HCT116 (cell line): ENCODE measurements at regions of chr16 and their contacts with region 1.

Region 1: GRCh38 chr16:67279296-67280089 is at the start of gene PLEKHG4:
- DNase-seq: peak; percentile 52
- ATAC-seq: peak; percentile 84
- H3K4me3 ChIP-seq: peak within 1 kb of the TSS; percentile 86 to 87
- H3K27ac ChIP-seq: peak within 1 kb of the TSS; percentile 91
- H3K4me1 ChIP-seq: peaks cover 28 to 39% of the 10 kb centered on the region in 2 experiments
- H3K27me3 ChIP-seq: no peaks in the 10 kb centered on the region
- CTCF ChIP-seq: peak in 2 of 3 experiments; percentile 62 to 79; a peak in 4 of 6 replicates
- POLR2A ChIP-seq: peak; percentile 33
- RAD21 ChIP-seq: no peak
- total RNA-seq, gene PLEKHG4: 38.5 TPM

Region 2: DNA sequence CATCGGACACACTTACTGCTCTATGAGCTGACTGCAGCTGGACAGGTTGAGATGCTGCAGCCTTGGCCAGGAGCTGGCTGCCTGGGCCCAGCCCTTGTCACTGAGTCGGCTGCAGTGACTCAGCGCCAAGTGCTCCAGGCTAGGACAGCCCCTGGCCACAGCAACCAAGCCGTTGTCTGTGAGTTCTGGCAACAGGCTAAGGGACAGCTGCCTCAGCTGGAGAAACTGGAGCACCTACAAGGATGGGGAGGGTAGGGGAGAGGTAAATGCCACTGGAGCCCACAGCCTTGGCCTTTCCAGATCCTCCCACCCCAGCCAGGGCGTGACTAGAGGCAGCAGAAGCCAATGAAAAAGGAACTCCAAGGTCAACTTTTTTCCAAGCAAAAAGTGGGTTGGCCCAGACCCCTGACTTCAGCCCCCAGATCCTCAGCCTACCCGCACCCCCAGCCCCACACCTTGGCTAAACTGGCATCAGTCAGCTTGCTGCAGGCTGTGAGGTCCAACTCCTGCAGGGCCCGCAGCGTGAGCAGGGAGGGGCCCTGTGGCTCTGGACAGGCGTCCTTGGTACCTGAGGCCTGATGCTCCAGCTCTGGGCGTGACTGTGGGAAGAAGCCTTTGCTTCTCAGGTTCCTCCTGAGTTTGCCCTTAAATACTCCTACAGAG is 71.5 kb before region 1 on chr16:
- CTCF ChIA-PET with region 1: no interaction called
- POLR2A ChIA-PET with region 1: no interaction called
- RAD21 ChIA-PET with region 1: no interaction called
- intact Hi-C with region 1: no loop called
- DNase-seq: no peak
- ATAC-seq: peak; percentile 69
- H3K4me3 ChIP-seq: no peak overlapping the region
- H3K27ac ChIP-seq: peak overlapping the region; percentile 40; the same call in 1 of the 2 replicates
- H3K4me1 ChIP-seq: peaks cover 11 to 29% of the 10 kb centered on the region in 2 experiments
- H3K27me3 ChIP-seq: no peaks in the 10 kb centered on the region
- CTCF ChIP-seq: no peak
- POLR2A ChIP-seq: no peak
- RAD21 ChIP-seq: no peak

Region 3: DNA sequence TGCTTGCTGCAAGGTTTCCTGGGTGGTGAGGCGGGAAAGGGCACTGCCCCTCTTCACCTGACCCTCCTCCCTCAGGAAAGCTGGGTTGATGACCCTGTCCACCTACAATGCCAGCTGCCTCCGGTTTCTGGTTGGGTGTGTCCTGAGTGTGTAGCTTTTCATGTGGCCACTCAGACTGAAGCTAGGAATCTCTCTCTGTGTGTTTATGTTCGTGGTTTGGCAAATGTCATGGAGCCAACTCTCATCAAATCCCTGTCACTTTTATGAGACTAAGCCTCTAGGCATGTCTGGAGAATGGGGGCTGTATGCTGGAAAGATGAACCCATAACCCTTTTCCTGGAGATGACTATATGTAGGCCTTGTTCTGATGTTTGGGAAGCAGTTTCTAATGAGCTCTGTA is 16.9 kb after region 1 on chr16:
- CTCF ChIA-PET with region 1: no interaction called
- POLR2A ChIA-PET with region 1: no interaction called
- RAD21 ChIA-PET with region 1: no interaction called
- intact Hi-C with region 1: no loop called
- DNase-seq: no peak
- ATAC-seq: peak; percentile 60; the same call in 1 of the 2 replicates
- H3K4me3 ChIP-seq: no peak overlapping the region
- H3K27ac ChIP-seq: no peak overlapping the region
- H3K4me1 ChIP-seq: peaks cover 7 to 8% of the 10 kb centered on the region in 2 experiments
- H3K27me3 ChIP-seq: no peaks in the 10 kb centered on the region
- CTCF ChIP-seq: no peak
- POLR2A ChIP-seq: no peak
- RAD21 ChIP-seq: no peak

Region 4: DNA sequence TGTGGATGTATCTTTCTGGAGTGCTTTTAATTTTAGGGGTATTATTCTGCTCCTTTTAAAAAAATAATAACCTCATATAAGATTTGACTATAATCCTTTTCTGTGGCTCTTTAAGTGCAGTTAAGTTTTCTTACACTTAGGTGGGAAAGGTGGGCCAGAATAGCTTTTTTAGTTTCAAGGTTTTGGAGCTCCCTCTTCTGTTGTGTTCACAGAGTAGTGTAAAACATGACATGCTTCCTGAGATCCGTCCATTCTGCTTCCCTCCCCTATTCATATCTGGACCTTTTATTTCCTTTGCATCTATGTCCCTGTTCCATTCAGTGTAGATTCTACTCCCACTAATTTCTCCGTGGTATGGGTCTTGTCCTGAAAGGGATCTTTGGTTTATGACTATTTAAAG is 60.0 kb after region 1 on chr16:
- CTCF ChIA-PET with region 1: no interaction called
- POLR2A ChIA-PET with region 1: no interaction called
- RAD21 ChIA-PET with region 1: no interaction called
- intact Hi-C with region 1: loop called (anchors 5 kb)
- DNase-seq: peak; percentile 18
- ATAC-seq: peak; percentile 55; the same call in 1 of the 2 replicates
- H3K4me3 ChIP-seq: no peak overlapping the region
- H3K27ac ChIP-seq: no peak overlapping the region
- H3K4me1 ChIP-seq: no peaks in the 10 kb centered on the region
- H3K27me3 ChIP-seq: no peaks in the 10 kb centered on the region
- CTCF ChIP-seq: peak in 2 of 3 experiments; percentile 34 to 76; a peak in 5 of 6 replicates
- POLR2A ChIP-seq: no peak
- RAD21 ChIP-seq: peak; percentile 83

Region 5: DNA sequence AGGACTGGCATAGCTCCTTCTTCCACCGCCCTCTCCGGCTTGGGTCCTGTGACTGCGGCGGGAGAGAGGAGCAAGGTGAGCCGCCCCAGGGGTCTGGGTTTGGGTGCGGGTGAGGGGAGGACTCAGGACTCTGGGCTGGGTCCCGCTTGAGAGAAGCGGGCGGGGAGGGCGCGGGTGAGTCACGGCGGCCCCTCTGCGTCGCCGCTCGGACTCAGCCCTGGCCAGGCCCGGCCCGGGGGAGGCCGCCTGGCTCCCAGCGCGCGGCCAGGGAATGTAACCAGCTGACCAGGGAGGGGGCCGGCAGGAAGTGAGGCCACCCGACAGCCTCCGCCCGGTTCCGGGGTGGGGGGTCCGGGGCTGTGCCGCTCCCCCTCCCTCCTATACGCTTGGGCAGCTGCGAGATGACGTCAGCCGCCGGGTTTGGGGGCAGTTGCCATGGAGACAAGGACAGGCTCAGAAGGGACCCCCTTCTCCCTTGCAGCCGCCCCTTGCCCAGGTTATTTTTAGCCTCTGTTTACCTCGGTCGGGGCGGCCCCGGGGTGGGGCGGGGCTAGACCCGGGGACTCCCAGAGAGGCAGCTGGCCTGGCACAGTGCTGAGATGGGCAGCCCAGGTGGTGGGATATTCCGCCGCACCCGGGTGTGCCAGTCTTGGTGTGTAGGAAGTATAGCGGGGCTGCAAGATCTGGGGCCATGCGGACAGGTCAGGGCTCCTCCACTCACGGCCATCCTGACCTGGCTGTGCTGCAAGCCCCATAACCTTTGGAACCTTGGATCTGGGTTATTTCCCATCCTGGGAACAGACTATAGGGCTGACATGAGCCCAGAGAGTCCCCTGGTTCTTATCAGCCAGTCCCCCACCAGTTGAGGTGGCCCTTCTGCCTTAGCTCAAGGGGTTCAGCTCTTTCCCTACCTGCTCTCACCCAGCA is 250.8 kb after region 1 on chr16:
- CTCF ChIA-PET with region 1: no interaction called
- POLR2A ChIA-PET with region 1: no interaction called
- RAD21 ChIA-PET with region 1: no interaction called
- intact Hi-C with region 1: no loop called
- DNase-seq: no peak
- ATAC-seq: peak; percentile 25
- H3K4me3 ChIP-seq: peak overlapping the region; percentile 77 to 91
- H3K27ac ChIP-seq: peak overlapping the region; percentile 90
- H3K4me1 ChIP-seq: peaks cover 17 to 55% of the 10 kb centered on the region in 2 experiments
- H3K27me3 ChIP-seq: no peaks in the 10 kb centered on the region
- CTCF ChIP-seq: no peak
- POLR2A ChIP-seq: no peak
- RAD21 ChIP-seq: no peak